SK-N-SH (cell line): ENCODE measurements at regions of chr17 and their contacts with region 1.

Region 1: GRCh38 chr17:65137021-65137991 is at the start of gene RGS9:
- DNase-seq: peak; percentile 97
- H3K4me3 ChIP-seq: peak within 1 kb of the TSS; percentile 46 to 60
- H3K27ac ChIP-seq: no peak within 1 kb of the TSS; a peak in 1 of 4 replicates
- H3K4me1 ChIP-seq: peaks cover 3 to 16% of the 10 kb centered on the region in 2 experiments; a peak in 1 of 4 replicates
- H3K27me3 ChIP-seq: peaks cover 11% of the 10 kb centered on the region; the same call in 1 of the 2 replicates
- CTCF ChIP-seq: peak; percentile 99
- EP300 ChIP-seq: no peak
- RAD21 ChIP-seq: peak; percentile 71
- polyA plus RNA-seq, gene RGS9: 1.3 and 1.4 TPM in 2 replicates

Region 2: DNA sequence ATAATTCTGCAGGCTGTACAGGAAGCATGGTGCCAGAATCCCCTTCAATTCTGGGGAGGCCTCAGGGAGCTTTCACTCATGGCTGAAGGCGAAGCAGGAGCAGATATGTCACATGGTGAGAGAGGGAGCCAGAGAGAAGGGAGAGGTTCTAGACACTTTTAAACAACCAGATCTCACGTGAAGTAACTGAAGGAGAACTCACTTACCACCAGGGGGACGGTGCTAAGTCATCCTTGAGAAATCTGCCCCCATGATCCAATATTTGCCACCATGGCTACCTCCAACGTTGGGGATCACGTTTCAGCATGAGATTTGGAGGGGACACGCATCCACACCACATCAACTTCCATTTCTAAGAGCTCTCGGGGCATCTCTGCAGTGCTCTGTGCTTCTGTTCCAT is 43.4 kb before region 1 on chr17:
- CTCF ChIA-PET with region 1: interaction called, 59 read pairs
- POLR2A ChIA-PET with region 1: no interaction called
- DNase-seq: no peak
- H3K4me3 ChIP-seq: no peak overlapping the region
- H3K27ac ChIP-seq: no peak overlapping the region
- H3K4me1 ChIP-seq: no peaks in the 10 kb centered on the region
- H3K27me3 ChIP-seq: peaks cover 10% of the 10 kb centered on the region; the same call in 1 of the 2 replicates
- CTCF ChIP-seq: peak; percentile 37
- EP300 ChIP-seq: no peak
- RAD21 ChIP-seq: no peak

Region 3: DNA sequence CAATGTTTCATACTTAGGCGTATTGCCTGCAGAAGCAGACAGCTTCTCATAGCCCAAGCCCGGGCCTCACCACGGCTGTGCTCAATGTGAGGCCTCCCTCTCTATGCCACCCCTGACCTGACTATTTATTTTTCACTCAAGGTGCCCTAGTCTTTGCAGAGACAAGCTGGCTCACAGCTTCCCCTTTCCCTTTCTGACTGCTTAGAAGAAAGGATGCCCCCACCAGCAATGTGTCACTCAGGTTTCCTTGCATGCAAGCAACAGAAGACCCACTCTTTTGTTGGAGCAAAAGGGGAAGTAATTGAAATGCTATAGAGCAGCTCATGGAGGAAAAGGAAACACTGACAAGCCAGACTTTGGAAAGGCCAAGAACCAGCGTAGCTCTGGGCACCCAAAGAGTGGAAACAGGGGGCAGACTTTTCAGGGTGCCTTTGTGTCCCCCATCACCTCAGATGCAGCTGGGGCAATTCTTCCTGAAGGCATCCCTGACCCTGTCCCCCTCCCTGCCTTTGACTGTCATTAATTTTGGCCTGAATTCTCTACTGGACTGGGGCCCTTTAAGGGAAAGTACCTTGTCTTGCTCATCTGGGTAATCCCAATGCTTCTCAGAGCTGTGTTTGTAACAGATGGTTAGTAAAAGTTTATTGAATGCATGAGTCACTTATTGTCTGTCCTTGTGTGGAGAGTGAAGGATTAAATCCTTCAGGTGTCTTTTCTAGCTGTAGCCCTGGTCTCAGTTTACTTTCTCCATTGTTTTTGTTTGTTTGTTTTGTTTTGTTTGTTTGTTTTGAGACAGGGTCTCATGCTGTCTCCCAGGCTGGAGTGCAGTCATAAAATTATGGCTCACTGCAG is 17.7 kb after region 1 on chr17:
- CTCF ChIA-PET with region 1: interaction called, 79 read pairs
- POLR2A ChIA-PET with region 1: no interaction called
- DNase-seq: no peak
- H3K4me3 ChIP-seq: no peak overlapping the region
- H3K27ac ChIP-seq: no peak overlapping the region
- H3K4me1 ChIP-seq: peaks cover 0 to 10% of the 10 kb centered on the region in 2 experiments; a peak in 1 of 4 replicates
- H3K27me3 ChIP-seq: no peaks in the 10 kb centered on the region; the same call in 1 of the 2 replicates
- CTCF ChIP-seq: no peak
- EP300 ChIP-seq: no peak
- RAD21 ChIP-seq: no peak

Region 4: DNA sequence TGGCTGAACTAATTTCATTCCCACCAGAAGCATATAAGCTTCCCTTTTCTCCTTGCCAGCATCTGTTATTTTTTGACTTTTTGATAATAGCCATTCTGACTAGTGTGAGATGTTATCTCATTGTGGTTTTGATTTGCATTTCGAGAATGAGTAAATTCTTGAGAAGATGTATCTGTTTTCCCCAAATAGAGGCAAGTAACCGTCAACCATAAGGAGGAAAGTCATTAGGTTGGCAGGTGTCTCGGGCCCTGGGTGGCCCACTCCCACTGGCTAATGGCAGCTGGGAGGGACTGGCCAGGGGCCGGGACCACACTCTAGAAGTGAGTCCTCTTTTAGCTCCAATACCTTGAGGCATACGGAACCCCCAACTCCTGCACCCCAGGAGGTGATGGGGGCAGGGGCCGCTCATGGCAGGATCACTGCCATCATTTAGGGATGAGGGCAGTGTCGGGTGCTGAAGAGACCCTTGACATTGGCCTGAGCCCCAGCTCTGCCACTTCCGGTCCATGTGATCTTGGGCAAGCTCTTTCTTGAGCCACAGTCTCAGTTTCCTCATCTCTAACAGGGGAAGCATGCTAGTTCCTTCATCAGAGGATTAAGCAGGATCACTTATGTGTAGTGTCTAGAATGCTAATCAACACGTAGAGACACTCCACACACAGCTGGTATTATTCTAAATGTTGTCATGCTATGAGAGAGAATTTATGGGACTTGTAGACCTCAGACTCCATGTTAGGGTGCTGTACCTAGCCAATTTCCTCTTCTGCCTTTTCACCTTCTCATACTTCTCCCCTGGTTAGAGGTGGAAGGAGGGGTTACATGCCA is 44.1 kb after region 1 on chr17:
- CTCF ChIA-PET with region 1: interaction called, 18 read pairs
- POLR2A ChIA-PET with region 1: interaction called, 4 read pairs
- DNase-seq: no peak
- H3K4me3 ChIP-seq: no peak overlapping the region
- H3K27ac ChIP-seq: peak overlapping the region; percentile 14 to 79; a peak in 2 of 4 replicates
- H3K4me1 ChIP-seq: peaks cover 34 to 54% of the 10 kb centered on the region in 2 experiments
- H3K27me3 ChIP-seq: no peaks in the 10 kb centered on the region
- CTCF ChIP-seq: no peak
- EP300 ChIP-seq: peak; percentile 78 to 97; a peak in 3 of 4 replicates
- RAD21 ChIP-seq: no peak